ENCODE measurements at regions of chr10 and their contacts with region 1.

Region 1: DNA sequence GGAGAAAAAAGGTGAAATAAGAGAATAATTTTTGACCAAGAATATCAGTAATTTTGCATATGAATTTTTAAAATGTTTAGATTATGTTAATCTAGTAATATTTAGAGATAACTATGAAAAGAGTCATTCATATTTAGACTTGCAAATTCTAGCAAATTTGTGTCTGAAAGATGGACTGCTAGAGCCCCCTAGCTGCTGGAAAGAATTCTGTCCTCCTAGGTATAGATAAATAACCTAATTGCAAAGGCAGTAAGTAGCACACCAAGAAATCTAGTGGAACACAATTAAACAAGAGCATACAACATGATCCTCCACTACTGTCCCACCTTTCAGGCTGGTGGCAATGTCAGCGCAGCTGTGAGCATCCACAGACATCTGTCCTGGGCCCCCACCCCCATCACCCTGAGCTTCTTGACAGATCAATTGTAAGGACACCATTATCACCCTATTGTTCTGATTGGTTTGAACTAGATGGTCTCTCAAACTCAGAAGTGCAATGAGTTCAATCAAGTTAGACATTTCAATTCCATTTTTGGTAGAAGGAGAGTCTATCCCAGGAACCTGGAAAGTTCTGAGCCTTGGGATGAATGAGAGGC is 15.0 kb upstream of the GFRA1 start:
- ATAC-seq: peak in 3 of 8 experiments; percentile 42 to 72 (median 52)
- H3K4me3 ChIP-seq: no peak overlapping the region
- H3K27ac ChIP-seq: no peak overlapping the region
- H3K4me1 ChIP-seq: no peaks in the 10 kb centered on the region

Region 2: GRCh38 chr10:115432188-115432775 is 855.7 kb before region 1 on chr10:
- in situ Hi-C with region 1: loop called in 2 of 9 experiments (anchors 25 kb)
- ATAC-seq: peak in 1 of 8 experiments; percentile 41
- H3K4me3 ChIP-seq: no peak overlapping the region
- H3K27ac ChIP-seq: no peak overlapping the region
- H3K4me1 ChIP-seq: no peaks in the 10 kb centered on the region

Region 3: DNA sequence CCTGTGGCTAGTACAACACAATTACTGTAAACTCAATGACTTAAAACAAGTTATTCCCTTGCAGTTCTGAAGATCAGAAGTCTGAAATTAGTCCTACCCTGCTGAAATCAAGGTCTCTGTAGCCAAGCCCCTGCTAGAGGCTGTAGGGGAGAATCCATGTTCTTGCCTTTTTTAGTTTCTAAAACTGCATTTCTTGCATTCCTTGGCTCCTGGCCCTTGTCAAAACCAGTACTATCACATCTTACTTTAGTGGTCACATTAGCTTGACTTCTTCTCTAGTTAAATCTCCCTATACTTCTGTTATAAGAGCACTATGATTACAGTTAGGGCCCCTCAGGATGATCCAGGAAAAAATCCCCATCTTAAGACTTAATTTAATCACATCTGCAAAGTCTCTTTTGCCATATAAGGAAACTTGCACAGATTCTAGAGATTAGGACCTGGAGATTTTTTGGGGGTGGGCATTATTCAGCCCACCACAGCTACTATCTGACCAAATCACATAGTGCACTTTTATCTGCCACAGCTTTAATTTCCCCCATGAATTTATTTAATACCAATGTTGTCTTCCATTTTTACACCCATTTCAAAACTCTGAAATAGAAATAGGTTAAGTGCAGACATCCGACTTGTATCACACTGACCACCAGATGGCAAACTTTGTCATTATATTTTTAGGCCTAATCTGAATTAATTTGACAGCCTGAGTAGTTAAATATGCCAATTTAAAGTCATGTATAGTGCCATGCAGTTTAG is 581.8 kb before region 1 on chr10:
- in situ Hi-C with region 1: loop called in 7 of 9 experiments (anchors 25 kb)
- ATAC-seq: peak in 4 of 8 experiments; percentile 26 to 48 (median 38)
- H3K4me3 ChIP-seq: no peak overlapping the region
- H3K27ac ChIP-seq: no peak overlapping the region
- H3K4me1 ChIP-seq: no peaks in the 10 kb centered on the region

Region 4: GRCh38 chr10:115801992-115802391 is 486.0 kb before region 1 on chr10:
- in situ Hi-C with region 1: loop called in 1 of 9 experiments (anchors 10 kb)
- ATAC-seq: no peak
- H3K4me3 ChIP-seq: no peak overlapping the region
- H3K27ac ChIP-seq: no peak overlapping the region
- H3K4me1 ChIP-seq: no peaks in the 10 kb centered on the region

Region 5: DNA sequence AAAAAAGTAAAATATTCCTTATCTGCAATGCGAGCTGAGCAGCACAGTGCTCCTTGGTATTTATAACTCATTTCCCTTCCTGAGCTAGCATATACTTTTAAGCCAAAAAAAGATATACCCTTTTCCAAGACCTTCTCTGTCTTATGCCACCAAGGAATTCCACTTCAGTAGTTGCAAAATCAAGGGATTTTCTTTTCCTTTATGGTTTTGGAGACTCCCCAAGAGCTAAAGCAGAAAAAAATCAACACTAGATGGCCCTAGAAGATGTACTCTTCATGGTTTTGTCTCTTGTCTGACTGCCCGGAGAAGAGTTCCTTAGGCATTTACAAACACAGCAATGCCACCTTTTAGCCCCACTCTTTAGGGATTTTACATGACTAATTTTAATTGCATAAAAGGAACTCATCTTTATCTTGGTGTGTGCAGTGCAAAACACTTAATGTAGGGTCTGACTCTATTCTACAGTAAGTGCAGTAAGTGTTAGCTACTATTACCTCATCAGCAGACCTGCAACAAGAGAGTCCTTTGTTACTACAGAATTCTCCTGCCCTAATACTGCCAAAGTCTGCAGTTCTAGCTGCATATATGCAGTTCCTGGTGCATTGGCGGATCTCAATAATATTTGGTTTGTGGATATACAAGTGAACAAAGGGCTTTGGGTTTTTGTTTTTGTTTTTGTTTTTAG is 458.3 kb before region 1 on chr10:
- in situ Hi-C with region 1: loop called in 1 of 9 experiments (anchors 25 kb)
- ATAC-seq: peak; percentile 38 to 71 (median 60)
- H3K4me3 ChIP-seq: no peak overlapping the region
- H3K27ac ChIP-seq: no peak overlapping the region
- H3K4me1 ChIP-seq: no peaks in the 10 kb centered on the region